ENCODE measurements at regions of chr3 and their contacts with region 1.

Region 1: GRCh38 chr3:4954241-4955000 is 24.8 kb upstream of the BHLHE40 start:
- DNase-seq: no peak
- ATAC-seq: no peak
- H3K4me3 ChIP-seq: no peak overlapping the region
- H3K27ac ChIP-seq: no peak overlapping the region
- H3K4me1 ChIP-seq: no peaks in the 10 kb centered on the region
- H3K27me3 ChIP-seq: no peaks in the 10 kb centered on the region
- CTCF ChIP-seq: no peak
- EP300 ChIP-seq: no peak
- POLR2A ChIP-seq: no peak
- RAD21 ChIP-seq: no peak

Region 2: DNA sequence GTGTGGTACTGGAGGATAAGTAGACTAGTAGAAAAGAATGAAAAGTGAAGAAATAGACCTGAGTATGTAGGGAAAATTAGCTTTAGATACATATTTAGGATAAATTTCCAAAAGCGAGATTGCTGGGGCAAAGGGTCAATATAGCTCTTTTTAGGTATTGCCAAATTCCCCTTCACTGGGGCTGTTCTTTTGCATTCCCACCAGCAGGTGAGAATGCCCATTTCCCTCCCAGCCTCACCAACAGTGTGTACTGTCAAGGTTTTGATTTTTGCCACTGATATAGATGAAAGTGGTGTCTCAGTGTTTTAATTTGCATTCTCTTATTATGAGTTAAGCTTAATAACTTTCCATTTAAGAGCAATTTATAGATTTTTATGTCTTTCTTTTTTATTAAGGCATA is 10.9 kb before region 1 on chr3:
- CTCF ChIA-PET with region 1: no interaction called
- POLR2A ChIA-PET with region 1: interaction called, 10 read pairs
- in situ Hi-C with region 1: no loop called
- intact Hi-C with region 1: no loop called
- DNase-seq: peak in 3 of 4 experiments; percentile 40 to 56 (median 52)
- ATAC-seq: peak; percentile 84
- H3K4me3 ChIP-seq: no peak overlapping the region
- H3K27ac ChIP-seq: no peak overlapping the region
- H3K4me1 ChIP-seq: no peaks in the 10 kb centered on the region
- H3K27me3 ChIP-seq: no peaks in the 10 kb centered on the region
- CTCF ChIP-seq: peak; percentile 48 to 65 (median 49)
- EP300 ChIP-seq: no peak
- POLR2A ChIP-seq: no peak
- RAD21 ChIP-seq: no peak

Region 3: GRCh38 chr3:5504135-5504534 is 549.7 kb after region 1 on chr3:
- CTCF ChIA-PET with region 1: no interaction called
- POLR2A ChIA-PET with region 1: no interaction called
- in situ Hi-C with region 1: no loop called
- intact Hi-C with region 1: no loop called
- DNase-seq: no peak
- ATAC-seq: no peak; the same call in 1 of the 3 replicates
- H3K4me3 ChIP-seq: no peak overlapping the region
- H3K27ac ChIP-seq: no peak overlapping the region
- H3K4me1 ChIP-seq: peaks cover 5% of the 10 kb centered on the region in 2 experiments; a peak in 3 of 5 replicates
- H3K27me3 ChIP-seq: no peaks in the 10 kb centered on the region
- CTCF ChIP-seq: no peak
- EP300 ChIP-seq: no peak
- POLR2A ChIP-seq: no peak
- RAD21 ChIP-seq: no peak